Heart left ventricle (tissue), 16 donors: ENCODE measurements at regions of chr15 and their contacts with region 1.

Region 1: DNA sequence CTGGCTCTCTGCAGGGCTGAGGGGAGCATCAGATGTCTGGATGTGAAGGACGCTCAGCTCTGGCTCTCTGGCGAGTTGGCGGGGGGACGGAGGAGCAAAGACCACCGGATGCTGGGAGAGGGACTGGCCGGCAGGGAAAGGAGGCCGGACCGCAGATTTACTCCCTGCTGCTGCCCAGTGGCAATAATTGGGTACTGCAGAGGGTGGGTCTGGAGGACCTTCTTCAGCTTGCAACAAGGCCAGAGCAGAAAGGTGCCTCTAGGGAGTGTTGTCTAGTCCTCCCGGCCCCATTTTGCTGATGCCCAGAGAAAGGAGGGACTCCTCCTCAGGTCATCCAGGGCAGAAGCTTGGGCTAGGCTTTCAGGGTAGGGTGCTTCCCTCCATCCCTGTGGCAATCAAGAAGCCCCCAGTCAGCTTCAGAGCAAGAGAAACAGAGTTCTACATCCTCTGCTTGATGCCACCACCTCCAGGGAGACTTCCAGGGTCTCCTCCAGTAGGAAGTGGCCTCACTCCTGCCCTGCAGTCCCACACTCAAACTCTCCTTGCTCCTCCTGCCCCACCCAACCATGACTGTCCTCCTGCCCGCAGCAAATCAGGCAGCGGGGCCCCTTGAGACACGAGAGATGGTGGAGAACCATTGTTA is 20.3 kb upstream of the CSPG4 start:
- DNase-seq: peak in 4 of 5 donors; percentile 65 to 75 (median 70)
- ATAC-seq: peak; percentile 18 to 77 (median 67)
- H3K4me3 ChIP-seq: no peak overlapping the region
- H3K27ac ChIP-seq: peak overlapping the region in 3 of 12 donors; percentile 10 to 63 (median 13)
- H3K4me1 ChIP-seq: peaks cover 0 to 42% (median 18%) of the 10 kb centered on the region in 12 donors
- H3K27me3 ChIP-seq: no peaks in the 10 kb centered on the region
- CTCF ChIP-seq: peak; percentile 71 to 94 (median 87)
- POLR2A ChIP-seq: no peak

Region 2: GRCh38 chr15:75407083-75407482 is 325.8 kb before region 1 on chr15:
- intact Hi-C with region 1: no loop called
- DNase-seq: no peak
- ATAC-seq: no peak
- H3K4me3 ChIP-seq: no peak overlapping the region
- H3K27ac ChIP-seq: no peak overlapping the region
- H3K4me1 ChIP-seq: no peaks in the 10 kb centered on the region
- H3K27me3 ChIP-seq: no peaks in the 10 kb centered on the region
- CTCF ChIP-seq: no peak
- POLR2A ChIP-seq: no peak

Region 3: DNA sequence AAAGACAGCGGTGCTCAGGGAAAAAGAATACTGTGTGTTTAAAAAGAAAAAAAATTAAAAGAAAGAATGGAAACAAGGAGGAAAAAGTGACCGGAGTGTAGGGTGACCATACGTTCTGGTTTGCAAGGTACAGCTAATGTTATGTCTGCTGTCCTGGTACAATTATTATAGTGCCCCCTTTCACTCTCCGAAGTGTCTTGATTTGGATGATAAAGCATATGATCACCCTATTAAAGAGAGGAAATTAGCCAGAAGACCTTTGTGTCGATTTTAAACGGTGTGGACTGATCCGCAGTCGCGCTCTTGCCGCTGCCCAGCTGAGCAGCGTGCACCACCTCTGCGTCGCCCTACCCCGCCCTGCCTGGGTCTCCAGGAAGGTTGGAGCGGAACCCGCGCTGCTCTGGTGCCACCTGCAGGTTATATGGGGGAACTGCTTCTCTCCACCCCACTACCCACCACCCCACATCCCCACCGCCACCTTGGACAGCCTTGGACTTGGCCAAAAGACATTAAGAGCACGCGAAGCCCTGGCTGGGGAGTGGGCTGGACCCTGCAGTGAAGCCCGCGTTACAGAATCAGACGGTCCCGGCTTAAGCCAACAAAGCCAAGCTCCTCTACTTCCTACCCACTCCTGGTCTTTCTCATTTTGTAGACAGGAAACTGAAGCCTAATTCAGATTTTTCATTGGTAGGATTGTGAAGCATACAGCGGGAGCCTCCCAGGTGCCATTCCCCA is 69.1 kb after region 1 on chr15:
- intact Hi-C with region 1: loop called (anchors 1 to 10 kb)
- DNase-seq: peak; percentile 78 to 92 (median 84)
- ATAC-seq: peak; percentile 93 to 99 (median 98)
- H3K4me3 ChIP-seq: peak overlapping the region in 8 of 12 donors; percentile 11 to 40 (median 29)
- H3K27ac ChIP-seq: no peak overlapping the region
- H3K4me1 ChIP-seq: peaks cover 0 to 16% (median 4%) of the 10 kb centered on the region in 12 donors
- H3K27me3 ChIP-seq: peaks cover 0 to 27% (median 0%) of the 10 kb centered on the region in 9 donors
- CTCF ChIP-seq: peak; percentile 79 to 98 (median 92)
- POLR2A ChIP-seq: no peak